ENCODE measurements at regions of chr12 and their contacts with region 1.

Region 1: GRCh38 chr12:42129595-42130204 is 15.0 kb downstream of the GXYLT1 start:
- DNase-seq: peak; percentile 42
- H3K4me3 Mint-ChIP-seq: no peak overlapping the region
- H3K27ac Mint-ChIP-seq: no peak overlapping the region
- H3K4me1 Mint-ChIP-seq: peaks cover 41% of the 10 kb centered on the region
- H3K27me3 Mint-ChIP-seq: no peaks in the 10 kb centered on the region

Region 2: GRCh38 chr12:42144408-42145196 is 14.9 kb after region 1 on chr12 and contains the start of gene GXYLT1:
- CTCF ChIA-PET with region 1: no interaction called
- intact Hi-C with region 1: loop called (anchors 1 kb)
- DNase-seq: peak; percentile 78
- H3K4me3 Mint-ChIP-seq: peak within 1 kb of the TSS; percentile 90
- H3K27ac Mint-ChIP-seq: peak within 1 kb of the TSS; percentile 75
- H3K4me1 Mint-ChIP-seq: peaks cover 28% of the 10 kb centered on the region
- H3K27me3 Mint-ChIP-seq: no peaks in the 10 kb centered on the region
- total RNA-seq, gene GXYLT1: 4.6 to 5.1 TPM

Region 3: GRCh38 chr12:42332301-42333285 is 202.9 kb after region 1 on chr12:
- CTCF ChIA-PET with region 1: interaction called, 7 read pairs
- intact Hi-C with region 1: loop called (anchors 1 kb)
- DNase-seq: peak; percentile 32
- H3K4me3 Mint-ChIP-seq: no peak overlapping the region
- H3K27ac Mint-ChIP-seq: no peak overlapping the region
- H3K4me1 Mint-ChIP-seq: peaks cover 58% of the 10 kb centered on the region
- H3K27me3 Mint-ChIP-seq: no peaks in the 10 kb centered on the region

Region 4: DNA sequence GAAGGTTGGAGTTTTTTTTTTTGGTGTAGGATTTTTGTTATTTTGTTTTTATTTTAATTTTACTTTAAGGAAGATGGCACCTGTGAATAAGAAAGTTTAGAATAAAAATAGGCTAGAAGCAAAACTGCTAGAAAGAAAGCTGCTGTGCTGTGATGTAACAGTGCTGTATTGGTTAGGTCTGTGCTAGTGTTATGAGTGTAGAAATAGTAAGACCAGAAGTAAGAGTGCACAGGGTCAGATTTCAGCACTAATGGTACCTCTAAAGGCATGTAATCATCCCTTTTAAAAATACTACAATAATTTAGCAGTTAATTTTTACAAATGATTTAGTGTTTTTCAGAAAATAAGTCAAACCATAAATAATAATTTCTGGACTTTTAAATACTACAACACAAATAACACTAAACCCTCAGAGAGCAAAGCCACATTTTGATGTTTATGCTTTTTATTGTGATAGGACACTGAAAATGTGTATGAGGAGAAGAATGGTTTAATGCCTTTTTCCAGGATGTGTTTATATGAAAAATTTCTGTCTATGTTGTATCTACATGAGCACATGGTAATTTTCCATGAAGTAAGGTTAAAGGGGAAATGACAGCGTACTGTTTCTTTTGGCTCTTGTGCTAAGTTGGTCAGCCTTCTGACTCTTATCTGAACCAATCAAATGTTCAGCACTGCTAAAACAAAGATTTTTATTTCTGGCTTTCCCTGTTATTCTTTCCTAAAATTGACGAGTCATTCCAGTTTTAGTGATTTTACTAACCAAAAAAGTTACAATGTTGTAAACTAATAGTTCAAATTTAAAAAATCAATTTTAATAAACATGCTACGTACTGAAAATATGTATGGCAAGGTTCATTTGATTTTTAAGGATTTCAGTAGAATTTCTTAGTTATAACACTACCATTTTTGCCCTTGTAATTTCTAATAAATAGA is 292.4 kb after region 1 on chr12:
- CTCF ChIA-PET with region 1: no interaction called
- intact Hi-C with region 1: no loop called
- DNase-seq: no peak
- H3K4me3 Mint-ChIP-seq: no peak overlapping the region
- H3K27ac Mint-ChIP-seq: no peak overlapping the region
- H3K4me1 Mint-ChIP-seq: peaks cover 22% of the 10 kb centered on the region
- H3K27me3 Mint-ChIP-seq: no peaks in the 10 kb centered on the region

Region 5: GRCh38 chr12:42568952-42569915 is 439.5 kb after region 1 on chr12:
- CTCF ChIA-PET with region 1: no interaction called
- intact Hi-C with region 1: loop called (anchors 1 kb)
- DNase-seq: no peak
- H3K4me3 Mint-ChIP-seq: no peak overlapping the region
- H3K27ac Mint-ChIP-seq: no peak overlapping the region
- H3K4me1 Mint-ChIP-seq: no peaks in the 10 kb centered on the region
- H3K27me3 Mint-ChIP-seq: peaks cover 2% of the 10 kb centered on the region